ENCODE measurements at regions of chr6 and their contacts with region 1.

Region 1: GRCh38 chr6:151240036-151240685 is 394 bp downstream of the AKAP12 start:
- DNase-seq: peak; percentile 88 to 95 (median 91)
- ATAC-seq: peak; percentile 89 to 92
- H3K4me3 ChIP-seq: peak overlapping the region; percentile 80
- H3K27ac ChIP-seq: peak overlapping the region; percentile 58
- H3K4me1 ChIP-seq: no peaks in the 10 kb centered on the region
- H3K27me3 ChIP-seq: no peaks in the 10 kb centered on the region

Region 2: GRCh38 chr6:151014404-151015100 is 225.6 kb before region 1 on chr6:
- intact Hi-C with region 1: loop called in 1 of 4 experiments (anchors 10 kb)
- DNase-seq: peak; percentile 47 to 83 (median 79)
- ATAC-seq: peak; percentile 78 to 79
- H3K4me3 ChIP-seq: no peak overlapping the region
- H3K27ac ChIP-seq: no peak overlapping the region
- H3K4me1 ChIP-seq: no peaks in the 10 kb centered on the region
- H3K27me3 ChIP-seq: no peaks in the 10 kb centered on the region

Region 3: DNA sequence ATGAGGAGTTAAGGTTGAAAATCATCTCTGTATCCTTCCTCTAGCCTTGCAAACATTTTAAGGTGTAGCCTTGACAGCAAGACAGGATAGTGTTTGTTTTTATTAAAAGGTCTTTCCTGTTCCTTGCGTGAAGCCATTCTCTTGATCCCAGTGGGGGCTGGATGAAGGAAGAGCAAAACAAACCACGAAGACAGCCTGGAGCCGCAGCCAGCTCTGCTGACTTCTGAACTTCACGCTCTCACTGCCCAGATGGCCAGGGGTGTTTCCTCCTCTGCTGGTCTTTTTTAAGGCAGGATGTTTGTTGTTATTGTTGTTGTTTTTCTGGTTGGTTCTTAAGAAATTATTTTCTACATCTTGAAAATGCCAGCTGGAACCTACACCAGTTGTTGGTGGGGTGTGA is 218.3 kb before region 1 on chr6:
- intact Hi-C with region 1: loop called in 2 of 4 experiments (anchors 10 kb)
- DNase-seq: no peak
- ATAC-seq: peak; percentile 25 to 44
- H3K4me3 ChIP-seq: no peak overlapping the region
- H3K27ac ChIP-seq: no peak overlapping the region
- H3K4me1 ChIP-seq: no peaks in the 10 kb centered on the region
- H3K27me3 ChIP-seq: no peaks in the 10 kb centered on the region

Region 4: GRCh38 chr6:151323791-151324487 is 83.8 kb after region 1 on chr6:
- intact Hi-C with region 1: loop called in 1 of 4 experiments (anchors 10 kb)
- DNase-seq: peak; percentile 84 to 93 (median 93)
- ATAC-seq: peak; percentile 90 to 94
- H3K4me3 ChIP-seq: no peak overlapping the region
- H3K27ac ChIP-seq: peak overlapping the region; percentile 54
- H3K4me1 ChIP-seq: peaks cover 5% of the 10 kb centered on the region
- H3K27me3 ChIP-seq: no peaks in the 10 kb centered on the region